ENCODE measurements at regions of chr9 and their contacts with region 1.

Region 1: DNA sequence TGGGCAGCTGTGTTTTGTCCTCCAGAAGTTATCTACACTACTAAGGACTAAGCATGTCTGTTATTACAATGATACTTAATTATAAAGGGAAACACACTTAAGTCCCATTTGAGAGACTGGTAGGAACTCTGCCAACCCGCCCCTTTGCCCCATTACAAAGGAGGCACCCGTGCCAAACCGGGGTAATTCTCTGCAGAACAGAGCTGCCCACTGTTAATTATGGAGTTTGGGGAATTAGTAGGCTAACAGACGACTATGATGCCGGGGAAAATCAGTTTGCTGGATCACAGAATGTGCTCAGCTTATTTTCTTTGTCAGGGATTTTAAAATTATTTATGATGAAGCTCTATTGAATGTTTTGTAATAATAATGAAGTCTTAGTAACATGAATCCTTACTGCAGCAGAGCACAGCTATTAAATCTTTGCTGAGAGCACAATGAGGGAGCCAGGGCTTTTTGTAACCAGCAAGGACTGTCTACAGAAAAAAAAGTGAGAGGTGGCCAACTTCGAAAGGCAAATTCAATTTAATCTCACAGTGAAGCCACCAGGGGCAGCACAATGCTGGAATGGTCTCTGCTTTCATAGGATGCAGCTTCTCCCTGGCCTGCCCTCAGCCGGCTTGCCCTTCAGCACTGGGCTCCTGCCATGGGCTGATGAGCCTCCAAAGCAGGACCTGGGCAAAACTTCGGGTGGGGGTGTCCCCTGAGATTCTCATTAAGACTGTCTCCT is 134.5 kb downstream of the GNAQ start:
- DNase-seq: peak in 2 of 3 donors; percentile 49 to 59
- H3K4me3 ChIP-seq: no peak overlapping the region
- H3K27ac ChIP-seq: peak overlapping the region in 1 of 2 experiments; percentile 8
- H3K4me1 ChIP-seq: peaks cover 15 to 62% (median 47%) of the 10 kb centered on the region in 4 experiments
- H3K27me3 ChIP-seq: no peaks in the 10 kb centered on the region

Region 2: GRCh38 chr9:77834898-77835488 is 62.1 kb before region 1 on chr9:
- CTCF ChIA-PET with region 1: no interaction called
- POLR2A ChIA-PET with region 1: no interaction called
- DNase-seq: no peak
- H3K4me3 ChIP-seq: no peak overlapping the region
- H3K27ac ChIP-seq: peak overlapping the region in 1 of 2 experiments; percentile 16
- H3K4me1 ChIP-seq: peaks cover 0 to 13% (median 8%) of the 10 kb centered on the region in 4 experiments
- H3K27me3 ChIP-seq: no peaks in the 10 kb centered on the region

Region 3: GRCh38 chr9:77884395-77884851 is 12.7 kb before region 1 on chr9:
- CTCF ChIA-PET with region 1: interaction called, 23 read pairs
- POLR2A ChIA-PET with region 1: interaction called, 3 read pairs
- DNase-seq: no peak
- H3K4me3 ChIP-seq: no peak overlapping the region
- H3K27ac ChIP-seq: no peak overlapping the region
- H3K4me1 ChIP-seq: peaks cover 6 to 33% (median 24%) of the 10 kb centered on the region in 4 experiments
- H3K27me3 ChIP-seq: no peaks in the 10 kb centered on the region

Region 4: DNA sequence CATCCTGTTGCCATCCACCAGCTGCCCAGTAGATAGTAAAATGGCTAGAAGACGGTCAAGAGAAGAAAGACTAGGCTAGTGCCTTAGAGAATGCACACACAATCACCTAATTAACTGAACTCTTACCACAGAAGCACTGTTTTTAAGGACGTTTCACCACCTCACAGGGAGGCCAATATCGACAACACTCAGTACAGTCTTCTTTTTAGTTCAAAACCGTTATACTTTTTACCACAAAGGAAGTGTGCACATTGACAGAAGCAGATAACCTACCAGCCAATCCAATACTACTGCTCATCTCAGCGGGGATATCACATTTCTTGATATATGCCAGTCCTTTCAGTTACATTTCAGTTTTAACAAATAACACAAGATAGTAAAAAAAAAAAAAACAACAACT is 12.2 kb after region 1 on chr9:
- CTCF ChIA-PET with region 1: interaction called, 20 read pairs
- POLR2A ChIA-PET with region 1: interaction called, 8 read pairs
- DNase-seq: peak; percentile 91 to 98 (median 95)
- H3K4me3 ChIP-seq: peak overlapping the region in 3 of 7 experiments; percentile 22 to 43 (median 37)
- H3K27ac ChIP-seq: peak overlapping the region; percentile 85 to 95
- H3K4me1 ChIP-seq: peaks cover 60 to 90% (median 73%) of the 10 kb centered on the region in 4 experiments
- H3K27me3 ChIP-seq: no peaks in the 10 kb centered on the region

Region 5: DNA sequence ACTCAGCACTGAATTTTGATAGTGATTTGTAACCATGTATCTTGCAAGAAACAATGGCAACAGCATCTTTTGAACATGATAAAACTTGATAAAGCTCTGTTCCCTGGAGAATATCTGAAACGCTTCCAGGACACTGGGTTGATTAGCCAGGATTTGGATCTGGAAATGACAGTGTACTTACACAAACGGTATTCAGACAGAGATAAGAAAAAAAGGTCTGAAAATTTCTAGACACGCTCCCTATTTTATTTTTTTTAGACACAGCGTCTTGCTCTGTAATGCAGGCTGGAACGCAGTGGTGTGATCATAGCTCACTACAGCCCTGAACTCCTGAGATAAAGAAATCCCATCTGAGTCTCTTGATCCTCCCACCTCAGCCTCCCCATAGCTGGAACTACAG is 25.5 kb after region 1 on chr9:
- CTCF ChIA-PET with region 1: interaction called, 12 read pairs
- POLR2A ChIA-PET with region 1: no interaction called
- DNase-seq: no peak
- H3K4me3 ChIP-seq: no peak overlapping the region
- H3K27ac ChIP-seq: no peak overlapping the region
- H3K4me1 ChIP-seq: peaks cover 6 to 33% (median 23%) of the 10 kb centered on the region in 4 experiments
- H3K27me3 ChIP-seq: no peaks in the 10 kb centered on the region